T-cell (primary cell): ENCODE measurements at regions of chr7 and their contacts with region 1.

Region 1: GRCh38 chr7:74334030-74334429 is 44.8 kb downstream of the CLIP2 start:
- DNase-seq: no peak
- ATAC-seq: no peak
- H3K4me3 ChIP-seq: no peak overlapping the region
- H3K4me3 Mint-ChIP-seq: no peak overlapping the region
- H3K27ac ChIP-seq: no peak overlapping the region
- H3K27ac Mint-ChIP-seq: no peak overlapping the region
- H3K4me1 ChIP-seq: peaks cover 0 to 4% of the 10 kb centered on the region in 2 experiments
- H3K4me1 Mint-ChIP-seq: peaks cover 0 to 6% (median 0%) of the 10 kb centered on the region in 3 donors
- H3K27me3 ChIP-seq: no peaks in the 10 kb centered on the region
- H3K27me3 Mint-ChIP-seq: no peaks in the 10 kb centered on the region

Region 2: DNA sequence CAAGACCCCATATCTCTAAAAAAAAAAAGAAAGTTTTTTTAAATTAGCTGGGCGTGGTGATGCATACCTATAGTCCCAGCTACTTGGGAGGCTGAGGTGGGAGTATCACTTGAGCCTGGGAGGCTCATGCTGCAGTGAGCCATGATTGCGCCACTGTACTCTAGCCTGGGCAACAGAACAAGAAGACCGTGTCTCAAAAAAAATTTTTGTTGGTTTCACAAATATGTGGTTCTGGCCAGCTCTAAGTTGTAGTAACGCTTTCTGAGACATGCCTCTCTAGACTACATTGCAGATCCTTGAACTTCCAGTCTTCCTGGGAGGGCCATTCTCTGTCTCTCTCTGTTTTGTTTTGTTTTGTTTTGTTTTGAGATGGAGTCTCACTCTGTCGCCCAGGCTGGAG is 1520.2 kb after region 1 on chr7:
- CTCF ChIA-PET with region 1: interaction called in 1 of 2 experiments, 10 read pairs
- POLR2A ChIA-PET with region 1: no interaction called
- DNase-seq: no peak
- ATAC-seq: no peak
- H3K4me3 ChIP-seq: no peak overlapping the region
- H3K4me3 Mint-ChIP-seq: no peak overlapping the region
- H3K27ac ChIP-seq: no peak overlapping the region
- H3K27ac Mint-ChIP-seq: no peak overlapping the region
- H3K4me1 ChIP-seq: no peaks in the 10 kb centered on the region
- H3K4me1 Mint-ChIP-seq: no peaks in the 10 kb centered on the region
- H3K27me3 ChIP-seq: no peaks in the 10 kb centered on the region
- H3K27me3 Mint-ChIP-seq: peaks cover 0 to 4% of the 10 kb centered on the region in 2 donors